ENCODE measurements at regions of chr7 and their contacts with region 1.

Region 1: DNA sequence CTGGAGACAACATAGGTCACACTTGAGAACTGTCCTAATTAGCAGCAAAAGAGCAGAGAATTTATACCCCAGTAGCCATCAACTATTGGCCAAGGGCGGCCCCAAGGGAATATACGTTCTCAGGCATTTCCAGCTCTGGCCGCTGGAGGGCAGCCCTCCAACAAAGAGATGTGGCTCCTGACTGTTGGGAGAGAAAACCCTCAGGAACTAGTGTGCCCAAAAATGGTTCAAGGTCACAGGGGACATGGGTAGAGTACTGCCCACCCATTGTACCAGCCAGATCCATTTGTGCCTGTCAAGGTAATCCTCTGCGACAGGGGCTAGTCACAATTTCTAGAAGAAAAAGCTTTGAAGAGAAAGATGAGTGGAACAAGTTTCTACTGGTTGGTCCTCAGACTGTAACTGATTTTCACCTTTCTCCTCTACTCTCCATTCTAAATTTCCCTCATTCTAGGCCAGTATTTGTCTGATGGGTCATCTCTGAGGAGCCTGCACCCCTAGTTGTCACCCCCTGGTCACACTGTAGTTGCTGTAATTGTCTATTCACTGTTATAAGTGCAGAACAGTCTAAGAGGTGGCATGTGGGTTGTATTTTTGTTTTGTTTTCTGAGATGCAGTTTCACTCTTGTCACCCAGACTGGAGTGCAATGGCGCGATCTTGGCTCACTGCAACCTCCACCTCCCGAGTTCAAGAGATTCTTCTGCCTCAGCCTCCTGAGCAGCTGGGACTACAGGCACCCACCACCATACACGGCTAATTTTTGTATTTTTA is 14.7 kb upstream of the C7orf33 start:
- DNase-seq: peak; percentile 41
- ATAC-seq: peak; percentile 98
- H3K4me3 ChIP-seq: no peak overlapping the region
- H3K27ac ChIP-seq: no peak overlapping the region
- H3K4me1 ChIP-seq: no peaks in the 10 kb centered on the region
- H3K27me3 ChIP-seq: peaks cover 2% of the 10 kb centered on the region; the same call in 1 of the 2 replicates
- CTCF ChIP-seq: peak; percentile 85
- POLR2A ChIP-seq: no peak
- RAD21 ChIP-seq: peak; percentile 83

Region 2: GRCh38 chr7:148773334-148773733 is 197.5 kb after region 1 on chr7:
- CTCF ChIA-PET with region 1: no interaction called
- POLR2A ChIA-PET with region 1: no interaction called
- dilution Hi-C with region 1: no loop called
- in situ Hi-C with region 1: no loop called
- intact Hi-C with region 1: loop called (anchors 2 kb)
- DNase-seq: no peak
- ATAC-seq: no peak
- H3K4me3 ChIP-seq: no peak overlapping the region
- H3K27ac ChIP-seq: peak overlapping the region; percentile 37
- H3K4me1 ChIP-seq: peaks cover 5% of the 10 kb centered on the region
- H3K27me3 ChIP-seq: no peaks in the 10 kb centered on the region
- CTCF ChIP-seq: no peak
- POLR2A ChIP-seq: no peak
- RAD21 ChIP-seq: no peak